Aorta (tissue), 5 donors: ENCODE measurements at regions of chr16 and their contacts with region 1.

Region 1: DNA sequence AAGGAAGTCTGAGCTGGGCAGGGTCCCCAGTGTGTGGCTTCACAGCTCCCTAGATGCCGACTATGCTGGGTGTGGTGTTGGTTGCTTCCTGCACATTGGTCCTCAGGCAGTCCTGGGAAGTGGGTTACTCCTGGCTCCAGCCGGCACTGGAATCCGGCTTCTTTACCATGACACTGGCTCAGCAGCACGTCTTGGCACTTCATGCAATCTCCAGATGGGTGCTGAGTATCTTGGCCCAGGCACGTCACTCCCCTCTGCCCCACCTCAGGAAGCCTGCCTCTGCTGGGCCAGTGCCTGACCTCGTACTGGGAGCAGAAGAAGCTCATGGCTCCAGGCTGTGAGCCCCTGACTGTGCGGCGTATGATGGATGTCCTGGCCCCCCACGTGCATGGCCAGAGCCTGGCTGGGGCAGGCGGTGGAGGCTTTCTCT is 24.5 kb downstream of the FCSK start:
- DNase-seq: no peak
- ATAC-seq: peak; percentile 15
- H3K4me3 ChIP-seq: no peak overlapping the region
- H3K27ac ChIP-seq: no peak overlapping the region
- H3K4me1 ChIP-seq: no peaks in the 10 kb centered on the region
- H3K27me3 ChIP-seq: no peaks in the 10 kb centered on the region

Region 2: DNA sequence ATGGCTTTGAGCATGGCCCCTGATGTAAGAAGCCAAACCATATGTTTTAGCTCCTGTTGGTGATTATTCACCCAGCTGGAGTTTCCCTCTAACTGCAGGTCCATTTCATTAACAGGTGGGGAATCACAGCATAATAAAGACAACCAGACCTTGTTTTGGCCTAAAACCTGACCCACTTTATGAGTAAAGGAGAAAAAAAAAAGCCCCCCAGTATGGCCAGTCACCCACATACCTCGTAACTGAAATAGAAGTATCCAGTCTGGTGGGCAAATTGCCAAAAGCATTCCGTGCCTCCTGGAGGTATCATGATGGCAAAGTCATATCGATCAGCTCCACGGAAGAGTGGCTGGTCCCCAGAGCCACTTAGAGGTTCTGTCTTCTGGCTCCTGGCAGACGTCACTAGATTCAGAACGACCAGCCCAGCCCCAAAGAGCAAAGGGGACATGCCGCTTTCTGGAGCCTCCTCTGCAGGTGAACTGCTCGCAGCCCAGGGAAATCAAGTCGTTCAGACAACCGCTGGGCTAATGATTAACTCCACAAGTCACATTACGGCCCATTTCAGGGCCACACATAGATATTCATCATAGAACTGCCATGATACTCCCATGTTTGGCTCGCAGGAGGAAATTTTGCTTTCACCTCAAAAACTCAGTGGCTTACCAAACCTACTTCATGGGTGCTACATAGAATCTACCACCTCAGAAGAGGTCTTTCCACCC is 1127.5 kb before region 1 on chr16 and contains the start of gene TMED6:
- intact Hi-C with region 1: no loop called
- DNase-seq: no peak
- ATAC-seq: no peak
- H3K4me3 ChIP-seq: no peak within 1 kb of the TSS
- H3K27ac ChIP-seq: no peak within 1 kb of the TSS
- H3K4me1 ChIP-seq: no peaks in the 10 kb centered on the region
- H3K27me3 ChIP-seq: no peaks in the 10 kb centered on the region
- total RNA-seq, gene TMED6: 0.84 to 1.1 TPM

Region 3: GRCh38 chr16:70395345-70395901 is 83.5 kb before region 1 on chr16:
- intact Hi-C with region 1: loop called in 1 of 2 experiments (anchors 5 kb)
- DNase-seq: peak; percentile 84 to 88
- ATAC-seq: peak; percentile 57
- H3K4me3 ChIP-seq: no peak overlapping the region
- H3K27ac ChIP-seq: no peak overlapping the region
- H3K4me1 ChIP-seq: no peaks in the 10 kb centered on the region
- H3K27me3 ChIP-seq: no peaks in the 10 kb centered on the region